ENCODE measurements at regions of chr19 and their contacts with region 1.

Region 1: DNA sequence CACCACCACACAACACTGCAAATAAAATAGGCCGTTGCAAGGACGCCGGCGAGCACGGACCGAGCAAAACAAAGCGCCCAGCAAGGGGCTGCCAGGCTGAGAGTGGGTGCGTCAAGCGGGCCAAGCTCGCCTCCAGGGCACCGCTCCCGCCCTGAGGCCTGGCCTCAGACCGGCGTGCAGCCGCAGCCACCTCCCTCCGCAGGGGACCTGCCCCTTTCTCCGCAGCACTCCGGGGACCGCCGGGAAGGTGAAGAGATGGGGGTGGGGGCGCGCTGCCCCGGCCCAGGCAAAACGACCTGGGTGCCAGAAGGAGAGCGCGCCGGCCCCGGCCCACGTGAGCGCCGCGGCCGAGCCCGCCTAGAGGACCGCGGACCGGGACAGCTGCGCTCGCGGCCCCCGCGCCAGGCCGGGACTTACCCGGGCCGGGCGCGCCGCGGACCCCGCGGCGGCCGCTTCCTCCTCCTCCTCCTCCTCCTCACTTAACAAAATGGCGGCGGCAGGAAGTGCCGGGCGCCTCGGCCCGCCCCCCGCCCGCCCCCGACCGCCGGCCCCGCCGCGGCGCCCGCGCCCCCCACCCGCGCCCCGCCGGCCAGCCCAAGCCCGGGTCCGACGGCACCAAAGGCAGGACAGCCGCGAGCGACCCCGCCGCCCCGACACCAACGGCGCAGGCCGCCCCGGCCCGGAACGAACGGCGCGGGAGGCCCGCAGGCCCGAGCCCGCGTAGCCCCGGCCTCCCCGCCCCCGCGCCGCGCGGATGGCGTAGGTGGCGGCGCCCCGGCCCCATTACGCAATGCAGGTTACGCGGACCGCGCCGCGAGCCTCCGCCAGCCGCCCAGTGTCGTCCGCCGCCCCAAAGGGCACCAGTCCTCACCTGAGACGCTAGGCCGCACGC is 674 bp downstream of the BRD4 start:
- DNase-seq: peak; percentile 72 to 80
- ATAC-seq: peak; percentile 57 to 76 (median 70)
- H3K4me3 ChIP-seq: peak overlapping the region; percentile 76
- H3K4me3 Mint-ChIP-seq: peak overlapping the region; percentile 98
- H3K27ac ChIP-seq: peak overlapping the region; percentile 87
- H3K27ac Mint-ChIP-seq: peak overlapping the region; percentile 94 to 97
- H3K4me1 ChIP-seq: peaks cover 49% of the 10 kb centered on the region
- H3K4me1 Mint-ChIP-seq: peaks cover 50 to 51% of the 10 kb centered on the region in 2 donors
- H3K27me3 ChIP-seq: no peaks in the 10 kb centered on the region
- H3K27me3 Mint-ChIP-seq: no peaks in the 10 kb centered on the region
- CTCF ChIP-seq: no peak

Region 2: GRCh38 chr19:15264061-15264932 is 67.4 kb before region 1 on chr19:
- intact Hi-C with region 1: loop called (anchors 2 kb)
- DNase-seq: peak; percentile 70 to 82
- ATAC-seq: peak; percentile 49 to 82 (median 71)
- H3K4me3 ChIP-seq: no peak overlapping the region
- H3K4me3 Mint-ChIP-seq: no peak overlapping the region
- H3K27ac ChIP-seq: no peak overlapping the region
- H3K27ac Mint-ChIP-seq: no peak overlapping the region
- H3K4me1 ChIP-seq: no peaks in the 10 kb centered on the region
- H3K4me1 Mint-ChIP-seq: peaks cover 9 to 27% of the 10 kb centered on the region in 2 donors
- H3K27me3 ChIP-seq: no peaks in the 10 kb centered on the region
- H3K27me3 Mint-ChIP-seq: no peaks in the 10 kb centered on the region
- CTCF ChIP-seq: peak; percentile 76

Region 3: GRCh38 chr19:15379083-15379995 is 47.7 kb after region 1 on chr19 and contains the start of gene AKAP8:
- intact Hi-C with region 1: loop called (anchors 2 kb)
- DNase-seq: peak; percentile 98 to 99
- ATAC-seq: peak; percentile 89 to 97 (median 91)
- H3K4me3 ChIP-seq: peak within 1 kb of the TSS; percentile 84
- H3K4me3 Mint-ChIP-seq: peak within 1 kb of the TSS; percentile 98
- H3K27ac ChIP-seq: peak within 1 kb of the TSS; percentile 98
- H3K27ac Mint-ChIP-seq: peak within 1 kb of the TSS; percentile 92 to 93
- H3K4me1 ChIP-seq: peaks cover 34% of the 10 kb centered on the region
- H3K4me1 Mint-ChIP-seq: peaks cover 25 to 37% of the 10 kb centered on the region in 2 donors
- H3K27me3 ChIP-seq: no peaks in the 10 kb centered on the region
- H3K27me3 Mint-ChIP-seq: no peaks in the 10 kb centered on the region
- CTCF ChIP-seq: no peak
- total RNA-seq, gene AKAP8: 65.3 to 87.6 (median 76.9) TPM

Region 4: GRCh38 chr19:15532779-15533521 is 201.3 kb after region 1 on chr19:
- intact Hi-C with region 1: no loop called
- DNase-seq: peak in 1 of 2 donors; percentile 22
- ATAC-seq: no peak
- H3K4me3 ChIP-seq: no peak overlapping the region
- H3K4me3 Mint-ChIP-seq: no peak overlapping the region
- H3K27ac ChIP-seq: no peak overlapping the region
- H3K27ac Mint-ChIP-seq: peak overlapping the region; percentile 11 to 34
- H3K4me1 ChIP-seq: peaks cover 3% of the 10 kb centered on the region
- H3K4me1 Mint-ChIP-seq: peaks cover 10 to 25% of the 10 kb centered on the region in 2 donors
- H3K27me3 ChIP-seq: no peaks in the 10 kb centered on the region
- H3K27me3 Mint-ChIP-seq: peaks cover 0 to 7% of the 10 kb centered on the region in 2 donors
- CTCF ChIP-seq: no peak

Measured in natural killer cell (primary cell).